ENCODE measurements at regions of chr6 and their contacts with region 1.

Region 1: DNA sequence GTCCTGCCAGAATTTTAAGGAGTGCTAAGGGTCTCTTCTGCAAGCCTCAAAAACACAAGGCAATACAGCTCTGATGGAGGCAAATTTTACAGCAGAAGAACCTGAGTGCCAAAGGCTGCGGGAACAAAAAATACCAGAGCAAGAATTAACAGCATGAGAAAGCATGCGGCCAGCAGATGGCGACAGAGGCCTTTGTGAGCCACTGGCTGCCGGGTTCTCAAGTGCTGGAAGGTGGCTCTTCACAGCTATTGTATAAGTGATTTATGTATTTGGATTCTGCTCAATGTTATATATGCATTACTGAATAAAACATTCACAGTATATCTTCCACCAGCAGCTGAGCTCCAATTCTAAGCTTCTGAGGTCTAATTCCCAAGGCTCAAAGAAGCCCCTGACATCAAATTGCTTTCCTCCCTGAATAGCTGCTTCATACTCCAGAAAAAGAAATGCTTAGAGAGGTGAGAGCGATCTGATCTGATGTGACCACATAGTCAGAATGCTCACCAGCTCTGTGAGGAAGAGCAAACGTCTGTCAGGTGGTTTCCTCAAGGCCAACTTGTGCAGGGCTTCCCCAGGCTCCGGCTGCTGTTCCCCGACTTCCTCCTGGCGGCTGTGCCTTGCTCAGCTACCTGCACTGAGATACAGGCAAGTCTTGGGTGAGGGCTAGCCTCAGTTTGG is 58.6 kb downstream of the PPP1R3G start:
- H3K4me3 Mint-ChIP-seq: no peak overlapping the region
- H3K27ac Mint-ChIP-seq: no peak overlapping the region
- H3K4me1 Mint-ChIP-seq: peaks cover 6% of the 10 kb centered on the region
- H3K27me3 Mint-ChIP-seq: no peaks in the 10 kb centered on the region

Region 2: DNA sequence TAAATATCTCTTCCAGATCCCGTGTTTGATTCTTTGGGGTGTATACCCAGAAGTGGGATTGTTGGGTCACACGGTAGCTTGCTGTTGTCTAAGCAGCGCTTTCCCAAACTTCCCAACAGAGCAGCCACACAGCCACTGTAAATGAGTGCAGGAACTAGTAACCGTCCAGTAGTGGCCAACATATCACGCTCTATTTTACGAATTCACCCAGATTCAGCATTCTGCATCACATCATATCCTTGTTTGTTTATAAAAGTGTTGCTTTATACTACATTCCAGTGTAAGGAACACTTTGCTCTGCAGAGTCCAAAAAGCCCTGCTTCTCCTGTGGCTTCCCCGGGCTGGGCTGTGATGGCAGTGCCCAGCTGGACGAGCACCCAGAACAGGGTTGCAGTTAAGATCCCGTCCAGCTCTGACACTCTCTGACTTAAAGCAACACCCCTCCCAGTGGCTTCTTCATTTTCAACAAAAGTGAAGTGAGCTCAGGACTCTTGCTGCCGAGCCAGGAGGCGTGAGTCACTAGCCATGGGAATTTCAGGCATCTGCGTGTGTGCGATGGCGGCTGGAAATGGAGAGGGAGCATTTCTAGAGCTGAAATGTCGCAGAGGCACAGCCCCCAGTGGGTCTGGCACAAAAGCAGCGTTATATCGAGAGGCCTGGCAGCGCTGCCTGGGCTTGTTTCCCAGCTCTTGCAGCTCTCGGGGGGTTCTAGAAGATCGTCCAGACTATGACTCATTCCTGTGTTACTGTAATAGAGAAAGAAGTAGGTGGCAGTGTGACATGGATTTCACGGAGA is 792.1 kb before region 1 on chr6:
- intact Hi-C with region 1: no loop called
- H3K4me3 Mint-ChIP-seq: no peak overlapping the region
- H3K27ac Mint-ChIP-seq: no peak overlapping the region
- H3K4me1 Mint-ChIP-seq: peaks cover 9% of the 10 kb centered on the region
- H3K27me3 Mint-ChIP-seq: peaks cover 20% of the 10 kb centered on the region

Region 3: DNA sequence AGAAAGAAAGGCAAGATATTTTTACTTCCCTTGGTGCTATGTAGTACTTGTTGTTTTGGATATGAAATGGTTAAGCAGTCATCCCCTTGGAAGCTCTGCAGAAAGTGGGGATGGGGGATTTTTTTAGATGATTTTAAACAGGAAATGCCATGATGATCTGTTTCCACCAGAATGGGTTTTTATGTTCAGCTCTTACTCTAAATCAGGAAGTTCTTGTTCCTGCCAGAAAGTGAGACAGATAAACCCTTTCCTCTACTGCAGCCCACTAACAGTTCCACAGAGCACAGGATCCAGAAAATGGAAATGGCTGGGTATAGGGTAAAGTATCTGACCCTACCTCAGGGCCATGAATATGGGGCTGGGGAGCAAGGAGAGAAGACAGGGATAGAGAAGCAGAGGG is 90.7 kb before region 1 on chr6:
- intact Hi-C with region 1: loop called (anchors 1 kb)
- H3K4me3 Mint-ChIP-seq: no peak overlapping the region
- H3K27ac Mint-ChIP-seq: peak overlapping the region; percentile 10
- H3K4me1 Mint-ChIP-seq: peaks cover 6% of the 10 kb centered on the region
- H3K27me3 Mint-ChIP-seq: no peaks in the 10 kb centered on the region

Region 4: DNA sequence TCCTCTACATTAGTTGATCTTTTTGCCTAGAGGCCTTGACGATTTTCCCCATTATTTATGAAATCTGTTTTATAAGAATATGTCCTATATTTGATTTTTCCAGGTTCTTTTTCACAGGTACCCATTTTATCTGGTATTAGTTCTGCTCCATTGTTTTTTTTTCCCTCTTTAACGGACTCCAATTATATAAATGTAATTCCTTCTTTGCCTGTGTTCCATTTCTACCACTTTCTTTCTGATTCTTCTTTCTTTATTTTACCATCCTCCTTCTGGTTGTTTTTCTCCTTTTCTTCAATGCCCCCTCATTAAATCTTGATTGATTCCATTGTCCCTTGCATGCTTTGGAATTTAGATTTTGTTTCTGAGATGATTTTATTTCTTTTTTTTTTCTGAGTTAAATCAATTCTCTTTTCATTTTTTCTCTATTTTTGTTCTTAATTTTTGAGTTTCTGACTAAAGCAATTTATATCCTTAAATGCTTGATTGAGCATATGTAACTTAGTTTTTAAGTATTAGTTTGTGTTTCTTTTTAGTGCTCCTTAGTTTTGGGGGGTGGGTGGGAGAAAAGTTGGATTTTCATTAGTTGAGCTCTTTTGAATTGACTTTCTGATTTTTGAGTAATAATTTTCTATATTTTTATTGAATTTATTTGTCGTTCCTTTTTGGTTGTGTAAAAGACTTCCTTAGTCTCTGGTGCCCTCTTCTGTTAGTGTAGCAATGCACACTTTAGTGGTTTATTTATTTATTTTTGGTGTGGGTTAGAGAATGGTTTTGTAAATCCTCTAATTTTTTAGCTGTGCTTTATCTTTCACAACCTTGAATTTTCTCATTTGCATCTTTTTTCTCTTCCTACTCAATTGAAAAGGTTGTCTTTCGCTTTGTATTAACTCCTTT is 258.3 kb after region 1 on chr6:
- intact Hi-C with region 1: loop called (anchors 1 kb)
- H3K4me3 Mint-ChIP-seq: no peak overlapping the region
- H3K27ac Mint-ChIP-seq: peak overlapping the region; percentile 39
- H3K4me1 Mint-ChIP-seq: peaks cover 12% of the 10 kb centered on the region
- H3K27me3 Mint-ChIP-seq: no peaks in the 10 kb centered on the region